Activated T-helper 1 cell treated with anti-CD3 and anti-CD28 coated beads, Interleukin-12 subunit alpha, Interleukin-12 subunit beta, Interleukin-2, Interleukin-4 antibody, amounts not matched to agents 30 ng/mL and 10 ng/mL and 1 ng/mL, durations not matched to agents 14 hours and 24 hours and 36 hours (primary cell): ENCODE measurements at regions of chrX and their contacts with region 1.

Region 1: DNA sequence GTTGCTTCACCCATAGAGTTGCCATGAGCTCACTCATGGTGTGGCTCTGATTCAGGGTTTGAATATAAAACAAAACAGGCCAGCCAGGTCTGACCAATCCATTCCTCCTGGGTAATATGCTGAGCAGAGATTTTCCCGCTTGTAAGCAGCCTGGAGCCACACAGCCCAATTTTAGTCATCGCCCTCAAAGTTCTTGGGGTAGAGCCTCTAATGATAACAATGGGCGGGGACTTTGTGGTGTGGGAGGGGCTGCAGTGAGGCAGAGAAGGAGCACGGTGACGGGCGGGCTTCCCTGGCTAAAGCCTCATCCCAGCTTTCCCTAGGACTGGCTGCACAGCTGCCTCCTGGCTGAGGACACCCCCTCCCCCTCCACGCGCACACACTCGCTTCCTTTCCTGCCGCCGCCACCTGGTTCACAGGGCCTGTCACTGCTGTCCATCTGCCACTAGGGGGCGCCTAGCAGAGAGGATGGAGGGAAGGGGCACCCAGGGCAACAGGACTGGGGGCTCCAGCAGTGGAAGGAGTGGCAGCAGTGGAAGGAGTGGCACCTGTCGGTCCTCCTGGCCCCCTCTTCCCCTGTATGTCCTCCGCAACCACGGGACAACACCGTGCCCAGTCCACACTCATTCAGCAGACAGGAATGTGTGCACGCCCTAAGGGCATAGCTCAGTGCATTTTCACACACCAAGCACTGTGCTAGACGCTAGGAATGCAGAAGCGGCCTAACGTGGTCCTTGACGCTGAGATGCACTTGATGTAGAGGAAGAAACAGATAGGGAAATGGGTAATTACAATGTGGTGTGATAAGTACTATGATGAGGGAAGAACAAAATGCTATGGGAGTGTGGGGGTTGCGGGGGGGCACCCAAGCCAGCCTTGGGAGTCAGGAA is 26.8 kb downstream of the PRPS1 start:
- DNase-seq: peak; percentile 38
- H3K4me3 Mint-ChIP-seq: no peak overlapping the region
- H3K27ac Mint-ChIP-seq: no peak overlapping the region
- H3K4me1 Mint-ChIP-seq: peaks cover 7% of the 10 kb centered on the region
- H3K27me3 Mint-ChIP-seq: no peaks in the 10 kb centered on the region

Region 2: DNA sequence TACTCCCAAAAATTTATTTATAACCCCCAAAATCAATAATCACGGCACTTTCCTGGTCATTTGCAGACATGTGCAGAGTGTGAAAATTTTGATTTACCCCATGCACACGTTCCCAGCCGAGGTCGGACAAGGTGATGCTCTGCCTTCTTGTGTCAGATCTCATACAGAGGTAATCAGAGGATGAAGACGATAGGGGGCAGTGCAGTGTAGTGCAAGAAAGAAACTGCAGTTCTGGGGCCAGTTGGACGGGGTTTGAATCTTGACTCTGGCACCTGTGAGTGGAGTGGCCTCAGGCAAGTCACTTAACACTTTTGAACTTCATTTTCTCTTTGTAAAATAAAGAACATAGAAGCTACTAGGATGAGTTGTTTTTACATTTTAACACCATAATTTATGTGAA is 117.3 kb before region 1 on chrX:
- intact Hi-C with region 1: loop called (anchors 2 kb)
- DNase-seq: peak; percentile 6
- H3K4me3 Mint-ChIP-seq: no peak overlapping the region
- H3K27ac Mint-ChIP-seq: no peak overlapping the region
- H3K4me1 Mint-ChIP-seq: no peaks in the 10 kb centered on the region
- H3K27me3 Mint-ChIP-seq: peaks cover 8% of the 10 kb centered on the region

Region 3: DNA sequence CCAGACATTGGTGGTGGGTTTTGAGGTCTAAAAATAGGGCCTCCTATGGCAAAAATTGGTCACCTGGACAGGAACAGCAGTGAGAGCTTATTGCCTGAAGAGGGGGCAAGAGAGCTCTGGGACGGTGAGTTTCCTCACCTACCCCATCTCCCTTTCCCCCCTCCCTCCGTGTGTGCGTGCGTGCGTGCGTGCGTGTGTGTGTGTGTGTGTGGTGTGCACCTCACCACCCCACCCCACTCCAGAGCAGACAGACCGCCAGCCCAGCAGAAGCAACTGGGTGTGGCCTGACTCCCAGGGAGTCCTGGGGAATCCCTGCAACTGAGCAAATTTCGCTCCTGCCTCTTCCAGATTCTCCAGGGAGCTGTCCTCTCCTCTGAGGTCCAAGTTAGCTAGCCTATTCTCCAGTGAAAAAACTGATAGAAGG is 17.9 kb after region 1 on chrX:
- intact Hi-C with region 1: loop called (anchors 1 kb)
- DNase-seq: peak; percentile 70
- H3K4me3 Mint-ChIP-seq: peak overlapping the region; percentile 53
- H3K27ac Mint-ChIP-seq: peak overlapping the region; percentile 99
- H3K4me1 Mint-ChIP-seq: peaks cover 46% of the 10 kb centered on the region
- H3K27me3 Mint-ChIP-seq: no peaks in the 10 kb centered on the region

Region 4: GRCh38 chrX:107716816-107717700 is 61.9 kb after region 1 on chrX:
- intact Hi-C with region 1: loop called (anchors 1 kb)
- DNase-seq: peak; percentile 84
- H3K4me3 Mint-ChIP-seq: peak overlapping the region; percentile 93
- H3K27ac Mint-ChIP-seq: peak overlapping the region; percentile 87
- H3K4me1 Mint-ChIP-seq: peaks cover 46% of the 10 kb centered on the region
- H3K27me3 Mint-ChIP-seq: no peaks in the 10 kb centered on the region

Region 5: GRCh38 chrX:108001174-108001814 is 346.2 kb after region 1 on chrX:
- intact Hi-C with region 1: loop called (anchors 5 kb)
- DNase-seq: no peak
- H3K4me3 Mint-ChIP-seq: no peak overlapping the region
- H3K27ac Mint-ChIP-seq: no peak overlapping the region
- H3K4me1 Mint-ChIP-seq: no peaks in the 10 kb centered on the region
- H3K27me3 Mint-ChIP-seq: peaks cover 4% of the 10 kb centered on the region

Region 6: DNA sequence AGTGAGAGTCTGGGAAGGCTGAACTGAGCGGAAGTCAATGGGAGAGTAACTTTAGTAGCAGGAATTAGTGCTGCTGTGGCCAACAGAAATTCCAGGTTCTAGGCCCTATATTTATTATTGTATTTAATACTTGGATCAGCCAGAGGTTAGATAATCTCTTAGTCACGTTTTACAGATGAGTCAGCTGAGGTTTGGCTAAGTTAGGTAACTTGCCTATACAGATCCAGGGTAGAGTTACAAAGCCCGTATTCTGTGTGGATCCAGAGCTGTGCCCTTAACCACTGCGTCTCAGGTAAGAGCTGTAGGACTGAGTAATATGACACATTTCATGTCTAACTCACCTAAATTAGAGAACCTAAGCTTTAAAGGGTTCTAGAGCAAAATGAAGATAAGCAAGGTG is 415.8 kb after region 1 on chrX:
- intact Hi-C with region 1: loop called (anchors 5 kb)
- DNase-seq: no peak
- H3K4me3 Mint-ChIP-seq: no peak overlapping the region
- H3K27ac Mint-ChIP-seq: no peak overlapping the region
- H3K4me1 Mint-ChIP-seq: no peaks in the 10 kb centered on the region
- H3K27me3 Mint-ChIP-seq: peaks cover 6% of the 10 kb centered on the region